Kidney (tissue), 22 donors: ENCODE measurements at regions of chr7 and their contacts with region 1.

Region 1: GRCh38 chr7:66261941-66262340 is 56.8 kb downstream of the TPST1 start:
- DNase-seq: no peak
- H3K4me3 ChIP-seq: no peak overlapping the region
- H3K27ac ChIP-seq: no peak overlapping the region
- H3K4me1 ChIP-seq: peaks cover 0 to 4% (median 0%) of the 10 kb centered on the region in 3 donors
- H3K27me3 ChIP-seq: no peaks in the 10 kb centered on the region
- CTCF ChIP-seq: no peak

Region 2: DNA sequence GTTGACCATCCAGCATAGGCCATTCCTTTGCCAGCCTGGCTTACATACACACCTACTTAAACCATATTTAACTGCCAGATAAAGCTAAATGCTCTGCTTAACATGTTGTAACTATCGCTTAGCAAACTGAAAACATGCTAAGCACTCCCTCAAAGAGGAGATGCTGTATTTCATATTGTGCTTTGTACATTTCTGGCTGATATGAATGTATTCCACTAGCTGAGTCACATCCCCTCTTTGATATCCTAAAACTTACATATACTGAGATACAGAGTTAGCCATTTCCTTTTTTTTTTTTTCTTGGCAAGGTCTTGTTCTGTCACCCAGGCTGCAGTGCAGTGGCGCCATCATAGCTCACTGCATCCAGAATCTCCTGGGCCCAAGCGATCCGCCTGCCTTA is 42.6 kb after region 1 on chr7:
- intact Hi-C with region 1: loop called (anchors 5 kb)
- DNase-seq: no peak
- H3K4me3 ChIP-seq: no peak overlapping the region
- H3K27ac ChIP-seq: peak overlapping the region; percentile 52 to 68
- H3K4me1 ChIP-seq: peaks cover 0 to 6% (median 6%) of the 10 kb centered on the region in 3 donors
- H3K27me3 ChIP-seq: no peaks in the 10 kb centered on the region
- CTCF ChIP-seq: no peak